Natural killer cell (primary cell): ENCODE measurements at regions of chr11 and their contacts with region 1.

Region 1: DNA sequence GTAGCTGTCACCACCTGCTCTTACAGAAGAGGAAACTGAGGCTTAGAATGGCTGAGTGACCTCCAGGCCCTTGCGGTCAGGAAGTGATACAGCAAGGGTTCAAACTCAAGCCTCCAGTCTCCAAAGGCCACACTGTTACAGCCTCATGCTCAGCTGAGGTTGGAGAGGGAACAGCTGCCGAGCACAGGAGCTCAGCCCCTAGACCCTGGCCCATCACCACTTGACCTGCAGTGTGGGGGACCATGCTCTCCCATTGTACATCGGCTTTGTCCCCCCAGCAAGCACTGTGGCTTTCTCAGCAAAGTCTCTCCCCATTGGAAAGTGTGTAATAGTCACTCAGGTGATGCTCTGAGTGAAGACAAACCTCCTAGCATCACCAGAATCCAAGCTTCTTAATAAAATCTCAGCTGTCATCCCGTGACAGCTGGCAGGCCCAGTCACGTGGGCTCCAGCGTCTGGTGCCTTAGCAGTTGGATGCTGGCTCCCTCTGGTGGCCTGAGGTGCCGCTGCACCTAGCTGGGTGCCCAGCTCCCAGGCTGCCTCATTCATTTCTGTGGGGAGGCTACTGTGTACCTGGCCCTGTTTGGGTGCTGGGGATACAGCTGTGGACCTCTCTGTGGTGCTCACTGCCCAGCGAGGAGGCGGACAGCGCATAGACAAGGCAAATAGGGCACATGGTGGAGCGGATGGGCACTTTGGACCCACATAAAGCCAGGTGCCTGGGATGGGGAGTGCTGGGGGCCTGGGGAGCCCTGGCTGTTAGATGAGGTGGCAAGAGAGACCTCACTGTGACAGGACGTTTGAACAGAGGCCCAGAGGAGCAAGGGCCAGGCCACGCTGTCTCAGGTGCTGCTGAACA is 19.1 kb upstream of the MYRF start:
- DNase-seq: peak; percentile 82 to 94
- ATAC-seq: peak; percentile 92 to 99 (median 99)
- H3K4me3 ChIP-seq: no peak overlapping the region
- H3K4me3 Mint-ChIP-seq: no peak overlapping the region
- H3K27ac ChIP-seq: no peak overlapping the region
- H3K27ac Mint-ChIP-seq: peak overlapping the region; percentile 46 to 91
- H3K4me1 ChIP-seq: peaks cover 7% of the 10 kb centered on the region
- H3K4me1 Mint-ChIP-seq: peaks cover 7 to 11% of the 10 kb centered on the region in 2 donors
- H3K27me3 ChIP-seq: no peaks in the 10 kb centered on the region
- H3K27me3 Mint-ChIP-seq: peaks cover 4 to 5% of the 10 kb centered on the region in 2 donors
- CTCF ChIP-seq: peak; percentile 88

Region 2: DNA sequence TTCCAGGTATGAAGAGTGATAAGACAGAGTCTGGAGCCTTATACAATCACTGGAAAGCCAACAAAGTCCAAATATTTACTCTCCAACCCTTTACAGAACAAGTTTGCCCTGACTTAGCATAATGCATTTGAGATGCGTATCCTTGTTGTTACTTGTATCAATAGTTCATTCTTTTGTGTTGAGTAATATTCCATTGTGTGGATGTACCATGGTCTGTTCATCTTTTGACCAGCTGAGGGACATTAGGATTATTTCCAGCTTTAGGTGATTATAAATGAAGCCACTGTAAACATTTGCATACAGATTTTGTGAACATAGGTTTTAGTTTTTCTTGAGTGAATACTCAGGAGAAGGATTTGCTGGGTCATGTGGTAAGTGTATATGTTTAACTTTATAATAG is 293.7 kb before region 1 on chr11:
- intact Hi-C with region 1: no loop called
- DNase-seq: no peak
- ATAC-seq: no peak
- H3K4me3 ChIP-seq: no peak overlapping the region
- H3K4me3 Mint-ChIP-seq: no peak overlapping the region
- H3K27ac ChIP-seq: no peak overlapping the region
- H3K27ac Mint-ChIP-seq: no peak overlapping the region
- H3K4me1 ChIP-seq: peaks cover 8% of the 10 kb centered on the region
- H3K4me1 Mint-ChIP-seq: peaks cover 32 to 33% of the 10 kb centered on the region in 2 donors
- H3K27me3 ChIP-seq: no peaks in the 10 kb centered on the region
- H3K27me3 Mint-ChIP-seq: no peaks in the 10 kb centered on the region
- CTCF ChIP-seq: no peak

Region 3: GRCh38 chr11:61477727-61478148 is 255.6 kb before region 1 on chr11:
- intact Hi-C with region 1: loop called (anchors 5 kb)
- DNase-seq: peak; percentile 52 to 72
- ATAC-seq: peak; percentile 41 to 73 (median 72)
- H3K4me3 ChIP-seq: no peak overlapping the region
- H3K4me3 Mint-ChIP-seq: no peak overlapping the region
- H3K27ac ChIP-seq: no peak overlapping the region
- H3K27ac Mint-ChIP-seq: no peak overlapping the region
- H3K4me1 ChIP-seq: peaks cover 8% of the 10 kb centered on the region
- H3K4me1 Mint-ChIP-seq: peaks cover 0 to 6% of the 10 kb centered on the region in 2 donors
- H3K27me3 ChIP-seq: no peaks in the 10 kb centered on the region
- H3K27me3 Mint-ChIP-seq: peaks cover 0 to 3% of the 10 kb centered on the region in 2 donors
- CTCF ChIP-seq: peak; percentile 94

Region 4: GRCh38 chr11:61679893-61680621 is 53.3 kb before region 1 on chr11 and contains the start of gene DAGLA:
- intact Hi-C with region 1: loop called (anchors 1 kb)
- DNase-seq: peak; percentile 87 to 88
- ATAC-seq: peak; percentile 90 to 92 (median 90)
- H3K4me3 ChIP-seq: no peak within 1 kb of the TSS
- H3K4me3 Mint-ChIP-seq: peak within 1 kb of the TSS; percentile 65
- H3K27ac ChIP-seq: no peak within 1 kb of the TSS
- H3K27ac Mint-ChIP-seq: peak within 1 kb of the TSS in 1 of 2 donors; percentile 85
- H3K4me1 ChIP-seq: peaks cover 31% of the 10 kb centered on the region
- H3K4me1 Mint-ChIP-seq: peaks cover 0 to 14% of the 10 kb centered on the region in 2 donors
- H3K27me3 ChIP-seq: peaks cover 19% of the 10 kb centered on the region
- H3K27me3 Mint-ChIP-seq: peaks cover 12 to 26% of the 10 kb centered on the region in 2 donors
- CTCF ChIP-seq: peak; percentile 89
- total RNA-seq, gene DAGLA: 0.18 to 0.48 (median 0.38) TPM

Region 5: DNA sequence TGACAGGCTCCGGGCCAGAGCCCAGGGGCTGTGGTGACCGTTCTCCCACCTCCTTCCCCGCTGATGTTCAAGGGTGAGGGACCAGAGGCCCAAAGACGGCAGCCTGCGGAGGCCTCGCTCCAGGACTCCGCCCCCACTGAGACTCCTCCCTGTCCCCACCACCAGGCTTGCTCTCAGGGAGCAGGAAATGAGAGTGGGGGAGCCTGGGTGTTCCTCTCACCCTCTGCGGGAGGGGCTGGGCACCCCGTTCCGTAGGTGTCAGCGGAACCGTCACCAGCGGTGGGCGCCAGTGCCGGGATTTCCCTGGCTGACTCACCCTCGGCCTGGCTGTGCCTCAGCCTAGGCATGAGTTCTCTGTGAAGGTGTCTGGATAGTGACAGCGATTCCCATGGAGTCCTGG is 37.4 kb before region 1 on chr11:
- intact Hi-C with region 1: loop called (anchors 1 kb)
- DNase-seq: peak; percentile 88 to 96
- ATAC-seq: peak; percentile 96 to 98 (median 97)
- H3K4me3 ChIP-seq: no peak overlapping the region
- H3K4me3 Mint-ChIP-seq: peak overlapping the region; percentile 78
- H3K27ac ChIP-seq: no peak overlapping the region
- H3K27ac Mint-ChIP-seq: peak overlapping the region; percentile 85 to 90
- H3K4me1 ChIP-seq: peaks cover 41% of the 10 kb centered on the region
- H3K4me1 Mint-ChIP-seq: peaks cover 20 to 35% of the 10 kb centered on the region in 2 donors
- H3K27me3 ChIP-seq: no peaks in the 10 kb centered on the region
- H3K27me3 Mint-ChIP-seq: no peaks in the 10 kb centered on the region
- CTCF ChIP-seq: no peak